ENCODE measurements at regions of chr1 and their contacts with region 1.

Region 1: DNA sequence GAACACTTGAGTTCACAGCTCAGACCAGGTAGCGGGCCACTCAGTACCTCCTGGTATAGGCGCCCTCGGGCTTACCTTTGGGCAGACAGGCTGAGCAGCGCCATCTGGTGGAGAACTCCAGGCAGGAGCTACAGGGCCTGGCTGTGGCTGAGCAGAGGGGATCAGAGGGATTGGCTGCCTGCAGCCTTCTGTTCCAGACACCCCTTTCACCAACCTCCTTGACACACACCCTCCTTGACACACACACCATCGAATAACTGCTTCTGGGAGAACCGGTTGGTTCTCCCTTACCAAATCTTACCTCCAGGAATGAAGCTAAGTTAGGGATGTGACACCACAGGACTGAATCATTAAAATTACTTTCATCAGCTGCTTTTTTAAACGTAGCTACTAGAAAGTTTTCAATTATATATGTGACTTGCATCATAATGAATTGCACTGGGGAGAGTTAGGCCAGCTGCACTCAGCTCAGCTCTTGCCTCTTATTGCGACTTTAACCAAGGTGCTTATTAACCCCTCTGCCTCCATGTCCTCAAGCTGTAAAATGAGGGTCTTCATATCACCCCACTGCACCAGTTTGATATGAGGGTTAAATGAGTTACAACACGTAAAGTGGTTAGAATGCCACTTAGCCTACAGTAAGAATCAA is 6.6 kb downstream of the LIN28A start:
- DNase-seq: peak; percentile 54 to 90 (median 80)
- ATAC-seq: peak; percentile 98 to 100 (median 100)
- H3K4me3 ChIP-seq: no peak overlapping the region
- H3K4me3 Mint-ChIP-seq: no peak overlapping the region
- H3K27ac ChIP-seq: no peak overlapping the region
- H3K27ac Mint-ChIP-seq: no peak overlapping the region
- H3K4me1 ChIP-seq: no peaks in the 10 kb centered on the region
- H3K4me1 Mint-ChIP-seq: peaks cover 0 to 9% (median 5%) of the 10 kb centered on the region in 3 donors
- H3K27me3 ChIP-seq: peaks cover 10 to 25% of the 10 kb centered on the region in 2 experiments
- H3K27me3 Mint-ChIP-seq: peaks cover 12 to 32% of the 10 kb centered on the region in 2 donors

Region 2: DNA sequence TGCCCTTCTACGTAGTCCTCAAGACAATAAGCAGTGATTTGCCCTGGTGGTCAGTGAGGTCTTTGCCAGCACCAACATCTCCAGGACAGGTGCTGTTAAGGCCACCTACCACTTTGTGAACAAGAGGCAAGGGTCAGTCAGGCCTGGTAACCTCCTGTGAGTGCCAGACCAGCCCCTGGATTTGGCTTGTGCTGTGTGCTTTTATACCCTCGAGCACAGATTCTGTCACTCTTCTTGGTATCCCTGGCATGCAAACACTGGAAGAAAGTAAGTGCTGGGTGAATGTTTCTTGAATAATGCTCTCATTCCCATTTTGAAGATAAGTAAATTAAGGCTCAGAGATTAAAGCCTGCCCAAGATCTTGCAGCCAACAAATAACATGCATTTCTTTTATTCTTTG is 193.7 kb before region 1 on chr1:
- CTCF ChIA-PET with region 1: no interaction called
- POLR2A ChIA-PET with region 1: no interaction called
- DNase-seq: no peak
- ATAC-seq: no peak
- H3K4me3 ChIP-seq: no peak overlapping the region
- H3K4me3 Mint-ChIP-seq: no peak overlapping the region
- H3K27ac ChIP-seq: no peak overlapping the region
- H3K27ac Mint-ChIP-seq: no peak overlapping the region
- H3K4me1 ChIP-seq: peaks cover 4 to 12% of the 10 kb centered on the region in 2 experiments
- H3K4me1 Mint-ChIP-seq: peaks cover 10 to 14% (median 12%) of the 10 kb centered on the region in 3 donors
- H3K27me3 ChIP-seq: peaks cover 2 to 49% of the 10 kb centered on the region in 2 experiments
- H3K27me3 Mint-ChIP-seq: peaks cover 9 to 19% of the 10 kb centered on the region in 2 donors

Region 3: DNA sequence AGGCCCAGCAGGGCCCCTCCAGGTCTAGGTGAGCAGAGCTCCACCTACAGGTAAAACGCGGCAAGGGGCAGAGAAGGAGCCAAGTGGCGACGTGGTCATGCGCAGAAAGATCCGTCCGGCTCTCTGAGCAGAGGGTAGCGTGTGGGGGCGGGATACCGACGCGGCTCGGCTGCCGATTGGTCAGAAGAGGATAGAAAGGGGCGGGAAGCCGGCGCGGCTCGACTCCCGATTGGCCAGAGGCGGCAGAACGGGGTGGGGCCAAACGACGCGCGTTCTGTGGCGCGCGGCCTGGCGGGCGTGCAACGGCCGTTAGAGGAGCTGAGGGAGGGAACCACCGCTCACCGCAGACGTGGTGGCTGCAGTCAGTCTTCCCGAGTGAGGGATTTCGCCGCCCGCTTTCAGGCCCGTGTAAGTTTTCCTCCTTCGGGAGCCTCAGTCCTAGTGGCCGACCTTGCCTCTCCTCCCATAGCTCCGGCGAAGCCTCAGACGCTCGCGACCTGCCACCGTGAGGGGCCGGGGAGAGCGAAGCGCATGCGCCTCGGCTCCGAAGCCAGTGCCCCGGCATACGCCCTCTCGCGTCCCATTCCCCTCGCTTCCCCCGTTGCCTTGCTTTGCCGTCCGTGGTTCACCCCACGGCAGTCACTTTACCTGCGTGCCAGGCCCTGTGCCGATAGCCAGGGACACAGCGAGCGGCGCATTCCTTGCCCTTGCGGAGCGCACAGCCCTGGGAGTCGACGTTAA is 183.2 kb before region 1 on chr1 and contains the start of gene CEP85:
- CTCF ChIA-PET with region 1: interaction called, 3 to 12 read pairs
- POLR2A ChIA-PET with region 1: no interaction called
- DNase-seq: peak; percentile 95 to 99 (median 98)
- ATAC-seq: peak; percentile 92 to 96 (median 94)
- H3K4me3 ChIP-seq: peak within 1 kb of the TSS; percentile 87 to 96
- H3K4me3 Mint-ChIP-seq: peak within 1 kb of the TSS; percentile 94 to 99 (median 99)
- H3K27ac ChIP-seq: peak within 1 kb of the TSS; percentile 79
- H3K27ac Mint-ChIP-seq: peak within 1 kb of the TSS; percentile 96
- H3K4me1 ChIP-seq: peaks cover 16 to 17% of the 10 kb centered on the region in 2 experiments
- H3K4me1 Mint-ChIP-seq: peaks cover 33 to 41% (median 38%) of the 10 kb centered on the region in 3 donors
- H3K27me3 ChIP-seq: no peaks in the 10 kb centered on the region
- H3K27me3 Mint-ChIP-seq: no peaks in the 10 kb centered on the region
- total RNA-seq, gene CEP85: 14.2 to 28.5 (median 20.7) TPM

Region 4: GRCh38 chr1:26431979-26432695 is 14.9 kb after region 1 on chr1 and contains the start of gene DHDDS:
- CTCF ChIA-PET with region 1: interaction called in 1 of 2 experiments, 14 read pairs
- POLR2A ChIA-PET with region 1: no interaction called
- DNase-seq: peak; percentile 94 to 99 (median 97)
- ATAC-seq: peak; percentile 94 to 97 (median 96)
- H3K4me3 ChIP-seq: peak within 1 kb of the TSS; percentile 62 to 64
- H3K4me3 Mint-ChIP-seq: peak within 1 kb of the TSS; percentile 88 to 95 (median 94)
- H3K27ac ChIP-seq: peak within 1 kb of the TSS; percentile 45
- H3K27ac Mint-ChIP-seq: peak within 1 kb of the TSS; percentile 93 to 94
- H3K4me1 ChIP-seq: peaks cover 7 to 23% of the 10 kb centered on the region in 2 experiments
- H3K4me1 Mint-ChIP-seq: peaks cover 19 to 24% (median 21%) of the 10 kb centered on the region in 3 donors
- H3K27me3 ChIP-seq: peaks cover 0 to 8% of the 10 kb centered on the region in 2 experiments
- H3K27me3 Mint-ChIP-seq: no peaks in the 10 kb centered on the region
- total RNA-seq, gene DHDDS: 34.9 to 48.2 (median 42.9) TPM

Region 5: DNA sequence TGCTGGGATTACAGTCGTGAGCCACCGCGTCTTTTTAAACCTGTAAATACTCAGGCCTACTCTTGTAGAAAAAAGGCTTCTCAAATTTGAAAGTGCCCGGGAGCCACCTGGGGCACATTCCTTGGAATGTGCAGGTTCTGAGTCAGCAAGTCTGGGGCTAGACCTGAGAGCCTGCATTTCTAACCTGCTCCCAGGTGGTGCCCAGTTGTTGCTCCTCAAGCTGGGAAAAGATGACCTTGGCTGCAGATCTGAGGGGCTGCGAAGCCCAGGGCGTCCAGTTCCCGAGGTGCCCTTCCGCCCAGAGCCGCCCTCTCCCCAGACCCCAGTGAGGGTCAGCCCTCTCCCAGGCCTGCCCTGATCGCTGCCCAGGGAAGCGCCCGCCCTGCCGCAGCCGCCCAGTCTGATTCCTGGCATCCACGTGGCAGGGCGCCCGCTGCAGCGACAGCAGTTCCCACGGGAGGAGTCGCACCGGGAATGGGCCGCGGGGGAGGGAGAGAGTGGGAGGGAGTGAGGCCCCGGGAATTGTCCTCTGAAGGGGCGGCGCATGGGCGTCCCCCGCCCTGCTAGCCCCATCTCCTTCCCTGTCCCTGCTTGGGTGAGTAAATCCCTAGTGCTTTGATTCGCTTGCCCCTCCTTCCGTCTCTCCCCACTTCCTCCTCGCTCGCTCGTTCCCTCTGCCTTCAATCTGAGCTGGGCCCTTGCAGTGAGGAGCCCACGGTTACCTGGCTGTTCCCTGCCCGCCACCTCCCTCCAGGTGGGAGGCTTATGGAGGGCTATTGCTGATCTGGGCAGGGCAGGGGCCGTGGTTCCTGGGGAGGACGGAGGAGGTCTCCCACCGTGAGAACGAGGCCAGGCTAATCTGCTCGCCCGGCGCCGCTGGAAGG is 614.2 kb after region 1 on chr1:
- CTCF ChIA-PET with region 1: no interaction called
- POLR2A ChIA-PET with region 1: no interaction called
- DNase-seq: no peak
- ATAC-seq: peak in 2 of 4 experiments; percentile 37 to 45
- H3K4me3 ChIP-seq: no peak overlapping the region
- H3K4me3 Mint-ChIP-seq: no peak overlapping the region
- H3K27ac ChIP-seq: no peak overlapping the region
- H3K27ac Mint-ChIP-seq: no peak overlapping the region
- H3K4me1 ChIP-seq: peaks cover 0 to 8% of the 10 kb centered on the region in 2 experiments
- H3K4me1 Mint-ChIP-seq: peaks cover 0 to 4% (median 2%) of the 10 kb centered on the region in 3 donors
- H3K27me3 ChIP-seq: peaks cover 0 to 34% of the 10 kb centered on the region in 2 experiments
- H3K27me3 Mint-ChIP-seq: peaks cover 10 to 11% of the 10 kb centered on the region in 2 donors